T-cell (primary cell): ENCODE measurements at regions of chr10 and their contacts with region 1.

Region 1: GRCh38 chr10:14543046-14543903 is 212.6 kb upstream of the FRMD4A start:
- DNase-seq: peak in 30 of 35 experiments; percentile 30 to 78 (median 64)
- ATAC-seq: peak; percentile 67 to 80 (median 69)
- H3K4me3 ChIP-seq: peak overlapping the region; percentile 22 to 32
- H3K4me3 Mint-ChIP-seq: peak overlapping the region; percentile 45 to 73 (median 52)
- H3K27ac ChIP-seq: peak overlapping the region; percentile 83
- H3K27ac Mint-ChIP-seq: peak overlapping the region; percentile 75 to 89
- H3K4me1 ChIP-seq: peaks cover 22 to 60% of the 10 kb centered on the region in 2 experiments
- H3K4me1 Mint-ChIP-seq: peaks cover 89 to 95% (median 91%) of the 10 kb centered on the region in 3 donors
- H3K27me3 ChIP-seq: no peaks in the 10 kb centered on the region
- H3K27me3 Mint-ChIP-seq: no peaks in the 10 kb centered on the region

Region 2: GRCh38 chr10:14200698-14201544 is 342.4 kb before region 1 on chr10:
- CTCF ChIA-PET with region 1: interaction called, 5 to 19 read pairs
- POLR2A ChIA-PET with region 1: no interaction called
- DNase-seq: no peak
- ATAC-seq: no peak
- H3K4me3 ChIP-seq: no peak overlapping the region
- H3K4me3 Mint-ChIP-seq: no peak overlapping the region
- H3K27ac ChIP-seq: no peak overlapping the region
- H3K27ac Mint-ChIP-seq: no peak overlapping the region
- H3K4me1 ChIP-seq: no peaks in the 10 kb centered on the region
- H3K4me1 Mint-ChIP-seq: no peaks in the 10 kb centered on the region
- H3K27me3 ChIP-seq: peaks cover 0 to 26% of the 10 kb centered on the region in 2 experiments
- H3K27me3 Mint-ChIP-seq: peaks cover 25 to 26% of the 10 kb centered on the region in 2 donors

Region 3: DNA sequence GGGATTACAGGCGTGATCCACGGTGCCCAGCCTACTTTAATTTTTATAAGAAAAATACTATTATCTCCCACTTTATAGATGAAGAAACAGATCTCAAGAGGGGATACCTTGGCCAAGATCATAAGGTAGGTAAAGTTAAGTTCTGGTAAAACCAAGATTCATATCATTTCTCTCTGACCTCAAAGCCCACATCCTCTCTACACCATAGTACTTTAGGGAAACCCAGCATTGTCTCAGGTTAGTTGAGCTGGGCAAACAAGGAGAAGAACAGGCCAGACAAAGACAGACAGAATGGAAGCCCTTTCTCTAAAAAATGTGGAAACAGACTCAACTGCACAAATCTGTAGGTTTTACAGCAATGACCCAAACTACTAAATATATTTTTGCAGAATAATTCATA is 14.8 kb before region 1 on chr10:
- CTCF ChIA-PET with region 1: interaction called in 1 of 2 experiments, 13 read pairs
- POLR2A ChIA-PET with region 1: interaction called in 1 of 2 experiments, 8 read pairs
- DNase-seq: peak in 1 of 35 experiments; percentile 64
- ATAC-seq: peak; percentile 82 to 94 (median 88)
- H3K4me3 ChIP-seq: no peak overlapping the region
- H3K4me3 Mint-ChIP-seq: peak overlapping the region; percentile 23 to 59 (median 31)
- H3K27ac ChIP-seq: peak overlapping the region; percentile 4
- H3K27ac Mint-ChIP-seq: peak overlapping the region; percentile 19 to 44
- H3K4me1 ChIP-seq: peaks cover 30 to 53% of the 10 kb centered on the region in 2 experiments
- H3K4me1 Mint-ChIP-seq: peaks cover 82 to 89% (median 86%) of the 10 kb centered on the region in 3 donors
- H3K27me3 ChIP-seq: no peaks in the 10 kb centered on the region
- H3K27me3 Mint-ChIP-seq: no peaks in the 10 kb centered on the region

Region 4: DNA sequence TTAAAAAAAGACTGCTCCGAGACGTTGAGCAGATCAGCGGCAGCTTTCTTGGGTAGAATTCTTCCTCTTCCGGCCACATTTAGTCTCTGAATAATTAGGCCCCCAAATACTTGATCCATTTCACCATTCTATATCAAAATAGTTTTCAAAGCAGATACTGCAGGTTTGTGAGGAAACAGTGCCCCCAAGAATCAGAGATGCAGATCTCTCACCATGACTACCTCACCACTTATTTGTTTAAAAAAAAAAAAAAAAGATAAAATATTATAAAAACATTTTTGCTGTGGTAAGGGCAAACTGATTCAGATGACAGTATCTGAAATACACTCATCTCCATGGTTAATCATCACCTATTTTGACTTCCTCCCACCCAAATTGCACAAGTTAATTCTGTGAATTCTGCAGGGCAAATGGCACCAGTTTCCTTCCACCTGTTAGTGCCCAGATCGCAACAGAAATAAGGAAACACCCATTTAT is 21.0 kb after region 1 on chr10:
- CTCF ChIA-PET with region 1: interaction called, 11 to 12 read pairs
- POLR2A ChIA-PET with region 1: interaction called, 7 to 9 read pairs
- DNase-seq: peak in 10 of 35 experiments; percentile 20 to 75 (median 38)
- ATAC-seq: peak; percentile 46 to 68 (median 62)
- H3K4me3 ChIP-seq: peak overlapping the region; percentile 25
- H3K4me3 Mint-ChIP-seq: peak overlapping the region; percentile 60 to 85 (median 69)
- H3K27ac ChIP-seq: peak overlapping the region; percentile 95
- H3K27ac Mint-ChIP-seq: peak overlapping the region; percentile 92 to 95
- H3K4me1 ChIP-seq: peaks cover 58 to 81% of the 10 kb centered on the region in 2 experiments
- H3K4me1 Mint-ChIP-seq: peaks cover 93 to 98% (median 94%) of the 10 kb centered on the region in 3 donors
- H3K27me3 ChIP-seq: no peaks in the 10 kb centered on the region
- H3K27me3 Mint-ChIP-seq: no peaks in the 10 kb centered on the region

Region 5: GRCh38 chr10:14588084-14588937 is 45.0 kb after region 1 on chr10:
- CTCF ChIA-PET with region 1: interaction called in 1 of 2 experiments, 14 read pairs
- POLR2A ChIA-PET with region 1: interaction called, 3 to 4 read pairs
- DNase-seq: peak in 4 of 35 experiments; percentile 20 to 72 (median 22)
- ATAC-seq: peak; percentile 3 to 36 (median 28)
- H3K4me3 ChIP-seq: peak overlapping the region; percentile 4 to 33
- H3K4me3 Mint-ChIP-seq: peak overlapping the region; percentile 61 to 70 (median 69)
- H3K27ac ChIP-seq: peak overlapping the region; percentile 95
- H3K27ac Mint-ChIP-seq: peak overlapping the region; percentile 92 to 99
- H3K4me1 ChIP-seq: peaks cover 57 to 74% of the 10 kb centered on the region in 2 experiments
- H3K4me1 Mint-ChIP-seq: peaks cover 93 to 97% (median 95%) of the 10 kb centered on the region in 3 donors
- H3K27me3 ChIP-seq: no peaks in the 10 kb centered on the region
- H3K27me3 Mint-ChIP-seq: no peaks in the 10 kb centered on the region

Region 6: GRCh38 chr10:14837757-14838581 is 294.7 kb after region 1 on chr10 and contains the starts of genes CDNF, HSPA14 and MSANTD7:
- CTCF ChIA-PET with region 1: interaction called, 4 to 11 read pairs
- POLR2A ChIA-PET with region 1: interaction called, 3 to 7 read pairs
- DNase-seq: peak; percentile 97 to 100 (median 99)
- ATAC-seq: peak; percentile 93 to 96 (median 95)
- H3K4me3 ChIP-seq: peak within 1 kb of the TSS; percentile 97 to 100
- H3K4me3 Mint-ChIP-seq: peak within 1 kb of the TSS; percentile 88 to 97 (median 92)
- H3K27ac ChIP-seq: peak within 1 kb of the TSS; percentile 92
- H3K27ac Mint-ChIP-seq: peak within 1 kb of the TSS; percentile 95 to 96
- H3K4me1 ChIP-seq: peaks cover 11 to 26% of the 10 kb centered on the region in 2 experiments
- H3K4me1 Mint-ChIP-seq: peaks cover 27 to 35% (median 33%) of the 10 kb centered on the region in 3 donors
- H3K27me3 ChIP-seq: no peaks in the 10 kb centered on the region
- H3K27me3 Mint-ChIP-seq: no peaks in the 10 kb centered on the region
- total RNA-seq, gene CDNF: 1.5 to 4.0 (median 2.5) TPM
- total RNA-seq, gene HSPA14: 13.0 to 19.5 (median 15.0) TPM
- total RNA-seq, gene MSANTD7: 11.7 to 31.5 (median 14.9) TPM